ENCODE measurements at regions of chr1 and their contacts with region 1.

Region 1: GRCh38 chr1:117654493-117655219 is 48.8 kb downstream of the TENT5C start:
- DNase-seq: peak in 2 of 35 experiments; percentile 28 to 55
- ATAC-seq: peak in 1 of 4 experiments; percentile 22
- H3K4me3 ChIP-seq: peak overlapping the region in 1 of 2 donors; percentile 11
- H3K4me3 Mint-ChIP-seq: peak overlapping the region; percentile 31 to 77 (median 49)
- H3K27ac ChIP-seq: peak overlapping the region; percentile 61
- H3K27ac Mint-ChIP-seq: peak overlapping the region; percentile 69 to 71
- H3K4me1 ChIP-seq: peaks cover 53 to 96% of the 10 kb centered on the region in 2 experiments
- H3K4me1 Mint-ChIP-seq: peaks cover 84 to 91% (median 89%) of the 10 kb centered on the region in 3 donors
- H3K27me3 ChIP-seq: peaks cover 0 to 9% of the 10 kb centered on the region in 2 experiments
- H3K27me3 Mint-ChIP-seq: peaks cover 2 to 7% of the 10 kb centered on the region in 2 donors

Region 2: DNA sequence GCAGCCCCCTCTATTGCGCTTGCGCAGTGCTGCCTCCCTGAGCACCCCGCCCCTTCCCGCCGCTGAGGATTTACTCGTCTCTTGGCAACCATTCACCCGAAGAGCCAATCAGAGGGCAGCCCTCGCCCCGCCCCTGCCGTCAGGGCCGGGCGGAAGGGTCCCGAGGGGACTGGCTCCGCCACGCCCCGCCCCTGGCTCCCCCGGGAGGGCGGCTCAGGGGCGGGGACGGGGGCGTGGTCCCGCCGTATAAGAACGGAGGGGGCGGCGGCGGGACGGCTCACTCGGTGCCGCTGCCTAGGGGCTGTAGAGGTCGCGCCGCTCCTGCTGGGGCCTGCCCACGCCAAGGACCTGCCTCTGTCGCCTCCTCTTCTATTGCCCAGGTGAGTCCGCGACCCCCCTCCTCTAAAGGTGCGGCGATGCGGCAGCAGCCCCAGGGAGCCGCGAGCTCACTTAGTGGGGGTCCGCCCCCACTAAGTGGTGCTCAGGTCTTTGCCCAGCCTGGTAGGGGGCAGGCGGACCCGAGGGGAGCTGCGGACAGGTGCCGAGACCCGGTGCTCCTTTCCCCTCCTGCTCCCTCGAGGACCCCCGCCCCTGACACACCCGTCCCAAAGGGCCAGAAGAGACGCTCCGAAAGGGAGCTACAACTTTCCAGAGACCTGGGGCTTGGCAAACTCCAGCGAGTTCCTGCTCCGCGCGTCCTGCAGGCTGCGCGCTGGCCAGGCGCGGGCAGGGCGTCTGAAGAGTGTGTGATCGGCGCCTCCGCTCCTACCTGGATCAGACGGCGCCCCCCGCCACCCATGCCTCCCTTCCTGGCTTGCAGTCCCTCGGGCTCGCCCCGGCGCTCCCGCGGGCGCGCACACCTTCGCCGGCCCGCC is 48.6 kb before region 1 on chr1 and contains the start of gene TENT5C:
- CTCF ChIA-PET with region 1: interaction called, 5 to 39 read pairs
- POLR2A ChIA-PET with region 1: interaction called, 8 to 97 read pairs
- DNase-seq: peak; percentile 96 to 99 (median 98)
- ATAC-seq: peak; percentile 90 to 96 (median 92)
- H3K4me3 ChIP-seq: peak within 1 kb of the TSS; percentile 91 to 92
- H3K4me3 Mint-ChIP-seq: peak within 1 kb of the TSS; percentile 97 to 98 (median 98)
- H3K27ac ChIP-seq: peak within 1 kb of the TSS; percentile 94
- H3K27ac Mint-ChIP-seq: peak within 1 kb of the TSS; percentile 95 to 98
- H3K4me1 ChIP-seq: peaks cover 11 to 32% of the 10 kb centered on the region in 2 experiments
- H3K4me1 Mint-ChIP-seq: peaks cover 41 to 52% (median 45%) of the 10 kb centered on the region in 3 donors
- H3K27me3 ChIP-seq: peaks cover 2% of the 10 kb centered on the region in 2 experiments
- H3K27me3 Mint-ChIP-seq: no peaks in the 10 kb centered on the region
- total RNA-seq, gene TENT5C: 7.6 to 133 (median 11.2) TPM

Region 3: DNA sequence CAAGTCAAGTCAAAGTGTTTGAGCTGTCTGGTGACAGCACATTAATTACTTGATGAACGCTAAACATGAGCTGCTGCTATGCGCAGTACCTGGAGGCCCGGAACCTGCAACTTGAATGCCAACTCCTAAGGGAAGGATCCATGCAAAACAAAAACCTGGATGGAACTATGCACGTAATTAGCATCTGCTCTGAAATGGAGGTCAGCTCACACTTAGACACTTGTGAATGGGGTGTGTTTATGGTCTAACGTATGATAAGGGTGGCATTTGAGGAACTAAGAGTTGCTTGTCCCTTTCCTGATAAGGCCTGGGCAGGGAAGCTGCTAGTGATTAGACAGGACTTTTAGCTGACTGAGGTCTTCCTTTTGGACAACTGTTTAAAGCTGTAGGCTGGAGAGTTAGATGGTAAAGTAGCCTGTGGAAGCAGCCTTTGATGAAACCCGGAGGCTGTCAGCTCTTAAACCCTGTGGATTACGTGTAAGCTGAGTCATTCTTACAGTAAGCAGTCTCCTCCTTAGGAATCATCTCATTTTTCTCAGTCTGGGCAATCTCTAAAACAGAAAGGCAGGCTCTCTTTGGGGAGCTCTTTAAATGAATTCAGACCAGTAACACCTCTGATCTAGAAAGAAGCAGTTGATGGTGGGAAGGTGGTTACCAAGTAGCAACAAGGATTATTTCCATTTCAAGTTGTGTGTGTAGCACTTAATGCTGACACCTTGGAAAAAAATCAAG is 42.0 kb before region 1 on chr1:
- CTCF ChIA-PET with region 1: interaction called, 5 to 39 read pairs
- POLR2A ChIA-PET with region 1: interaction called, 4 to 97 read pairs
- DNase-seq: no peak
- ATAC-seq: no peak
- H3K4me3 ChIP-seq: no peak overlapping the region
- H3K4me3 Mint-ChIP-seq: no peak overlapping the region
- H3K27ac ChIP-seq: peak overlapping the region; percentile 3
- H3K27ac Mint-ChIP-seq: no peak overlapping the region
- H3K4me1 ChIP-seq: peaks cover 1 to 66% of the 10 kb centered on the region in 2 experiments
- H3K4me1 Mint-ChIP-seq: peaks cover 59 to 92% (median 87%) of the 10 kb centered on the region in 3 donors
- H3K27me3 ChIP-seq: no peaks in the 10 kb centered on the region
- H3K27me3 Mint-ChIP-seq: no peaks in the 10 kb centered on the region

Region 4: DNA sequence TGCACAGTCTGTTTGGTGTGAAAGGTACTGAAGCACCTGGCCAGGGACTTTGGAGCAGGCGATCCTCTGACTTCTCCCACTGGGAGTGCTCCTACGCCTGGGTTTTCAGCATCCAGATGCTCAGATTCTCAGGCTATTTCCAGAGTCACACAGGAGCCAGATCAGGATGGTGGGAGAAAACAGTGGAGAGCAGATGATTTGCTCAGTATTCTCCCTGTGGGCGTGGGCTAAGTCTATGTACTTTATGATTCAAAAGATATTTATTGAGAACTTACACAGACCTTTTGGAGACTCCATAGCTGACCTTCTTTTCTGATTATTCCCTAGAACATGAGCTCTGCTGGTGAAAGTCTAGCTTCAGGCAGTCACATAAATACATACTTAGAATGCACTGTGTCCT is 85.8 kb after region 1 on chr1:
- CTCF ChIA-PET with region 1: no interaction called
- POLR2A ChIA-PET with region 1: interaction called in 1 of 2 experiments, 18 read pairs
- DNase-seq: no peak
- ATAC-seq: no peak
- H3K4me3 ChIP-seq: no peak overlapping the region
- H3K4me3 Mint-ChIP-seq: no peak overlapping the region
- H3K27ac ChIP-seq: no peak overlapping the region
- H3K27ac Mint-ChIP-seq: no peak overlapping the region
- H3K4me1 ChIP-seq: peaks cover 0 to 1% of the 10 kb centered on the region in 2 experiments
- H3K4me1 Mint-ChIP-seq: peaks cover 5 to 7% (median 7%) of the 10 kb centered on the region in 3 donors
- H3K27me3 ChIP-seq: no peaks in the 10 kb centered on the region
- H3K27me3 Mint-ChIP-seq: no peaks in the 10 kb centered on the region